H1 (cell line): ENCODE measurements at regions of chrX and their contacts with region 1.

Region 1: GRCh38 chrX:73963682-73964081 is 340.3 kb upstream of the ZCCHC13 start:
- DNase-seq: no peak
- H3K4me3 ChIP-seq: no peak overlapping the region
- H3K27ac ChIP-seq: no peak overlapping the region
- H3K4me1 ChIP-seq: peaks cover 0 to 20% (median 7%) of the 10 kb centered on the region in 4 experiments; a peak in 6 of 7 replicates
- H3K27me3 ChIP-seq: no peaks in the 10 kb centered on the region
- CTCF ChIP-seq: no peak
- EP300 ChIP-seq: no peak
- POLR2A ChIP-seq: no peak
- RAD21 ChIP-seq: no peak

Region 2: DNA sequence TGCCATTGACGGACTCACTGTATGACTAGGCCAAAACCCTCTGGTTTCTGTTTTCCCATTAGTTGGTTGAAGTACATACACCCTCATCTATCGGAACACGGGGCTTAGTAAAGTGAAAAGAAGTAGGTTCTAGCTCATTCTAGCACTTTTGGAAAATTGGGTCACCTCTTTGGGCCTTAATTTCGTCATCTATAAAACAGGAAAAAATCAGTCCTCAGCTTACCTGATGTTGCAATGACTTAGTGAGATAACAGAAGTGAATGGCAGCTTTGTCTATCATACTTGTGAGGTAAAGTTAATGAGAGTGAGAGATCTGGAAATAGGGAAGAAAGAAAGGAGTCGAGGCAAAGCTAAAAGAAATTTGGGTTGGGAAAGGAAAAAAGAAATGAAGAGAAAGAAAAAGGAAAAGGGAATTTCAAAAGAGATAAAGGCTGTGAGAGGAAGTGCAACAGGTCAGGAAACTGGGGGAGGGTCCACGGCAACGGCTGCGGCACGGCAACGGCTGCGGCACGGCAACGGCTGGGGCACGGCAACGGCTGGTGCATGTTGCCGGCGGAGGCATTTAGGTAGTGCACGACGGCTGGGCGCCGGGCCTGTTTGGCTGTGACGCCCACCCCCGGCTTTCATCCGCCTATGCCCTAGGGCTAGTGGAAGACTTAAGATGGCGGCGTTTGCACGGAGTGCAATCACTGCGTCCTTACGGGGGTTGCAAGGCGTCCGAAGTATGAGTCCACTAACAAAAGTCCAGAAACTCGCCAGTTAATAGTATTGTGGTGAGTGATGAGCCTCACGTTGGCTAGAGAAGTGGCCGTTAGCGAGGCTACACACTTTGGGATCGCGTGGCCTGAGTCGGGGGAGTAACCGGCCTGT is 19.8 kb before region 1 on chrX:
- CTCF ChIA-PET with region 1: no interaction called
- POLR2A ChIA-PET with region 1: interaction called, 14 read pairs
- DNase-seq: peak; percentile 63 to 80
- H3K4me3 ChIP-seq: peak overlapping the region; percentile 87 to 99 (median 94)
- H3K27ac ChIP-seq: peak overlapping the region; percentile 94
- H3K4me1 ChIP-seq: no peaks in the 10 kb centered on the region
- H3K27me3 ChIP-seq: no peaks in the 10 kb centered on the region
- CTCF ChIP-seq: no peak
- EP300 ChIP-seq: peak in 1 of 2 experiments; percentile 60; a peak in 1 of 3 replicates
- POLR2A ChIP-seq: peak; percentile 74 to 90
- RAD21 ChIP-seq: no peak

Region 3: GRCh38 chrX:73979551-73980131 is 16.0 kb after region 1 on chrX:
- CTCF ChIA-PET with region 1: no interaction called
- POLR2A ChIA-PET with region 1: interaction called, 10 read pairs
- DNase-seq: no peak
- H3K4me3 ChIP-seq: no peak overlapping the region
- H3K27ac ChIP-seq: no peak overlapping the region
- H3K4me1 ChIP-seq: peaks cover 0 to 9% (median 2%) of the 10 kb centered on the region in 4 experiments; a peak in 2 of 7 replicates
- H3K27me3 ChIP-seq: no peaks in the 10 kb centered on the region
- CTCF ChIP-seq: no peak
- EP300 ChIP-seq: no peak
- POLR2A ChIP-seq: no peak
- RAD21 ChIP-seq: no peak

Region 4: DNA sequence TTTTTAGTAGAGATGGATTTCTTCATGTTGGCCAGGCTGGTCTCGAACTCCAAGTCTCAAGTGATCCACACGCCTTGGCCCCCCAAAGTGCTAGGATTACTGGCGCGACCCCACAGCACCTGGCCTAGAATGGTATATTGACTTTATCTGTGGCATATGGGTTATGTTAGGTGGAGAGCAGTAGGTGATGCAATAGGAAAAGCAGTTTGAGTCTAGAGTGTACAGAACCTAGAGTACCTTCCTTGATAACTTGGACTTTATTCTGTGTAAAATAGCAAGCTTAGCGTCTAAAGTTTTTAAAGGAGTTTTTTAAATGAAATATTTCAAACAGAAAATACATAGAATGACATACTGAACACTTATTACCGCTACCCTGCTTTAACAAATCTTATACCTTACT is 28.3 kb after region 1 on chrX:
- CTCF ChIA-PET with region 1: no interaction called
- POLR2A ChIA-PET with region 1: no interaction called
- DNase-seq: no peak
- H3K4me3 ChIP-seq: no peak overlapping the region
- H3K27ac ChIP-seq: no peak overlapping the region
- H3K4me1 ChIP-seq: no peaks in the 10 kb centered on the region
- H3K27me3 ChIP-seq: no peaks in the 10 kb centered on the region
- CTCF ChIP-seq: no peak
- EP300 ChIP-seq: no peak
- POLR2A ChIP-seq: no peak
- RAD21 ChIP-seq: no peak